Naive thymus-derived CD4-positive, alpha-beta T cell (primary cell): ENCODE measurements at regions of chr15 and their contacts with region 1.

Region 1: DNA sequence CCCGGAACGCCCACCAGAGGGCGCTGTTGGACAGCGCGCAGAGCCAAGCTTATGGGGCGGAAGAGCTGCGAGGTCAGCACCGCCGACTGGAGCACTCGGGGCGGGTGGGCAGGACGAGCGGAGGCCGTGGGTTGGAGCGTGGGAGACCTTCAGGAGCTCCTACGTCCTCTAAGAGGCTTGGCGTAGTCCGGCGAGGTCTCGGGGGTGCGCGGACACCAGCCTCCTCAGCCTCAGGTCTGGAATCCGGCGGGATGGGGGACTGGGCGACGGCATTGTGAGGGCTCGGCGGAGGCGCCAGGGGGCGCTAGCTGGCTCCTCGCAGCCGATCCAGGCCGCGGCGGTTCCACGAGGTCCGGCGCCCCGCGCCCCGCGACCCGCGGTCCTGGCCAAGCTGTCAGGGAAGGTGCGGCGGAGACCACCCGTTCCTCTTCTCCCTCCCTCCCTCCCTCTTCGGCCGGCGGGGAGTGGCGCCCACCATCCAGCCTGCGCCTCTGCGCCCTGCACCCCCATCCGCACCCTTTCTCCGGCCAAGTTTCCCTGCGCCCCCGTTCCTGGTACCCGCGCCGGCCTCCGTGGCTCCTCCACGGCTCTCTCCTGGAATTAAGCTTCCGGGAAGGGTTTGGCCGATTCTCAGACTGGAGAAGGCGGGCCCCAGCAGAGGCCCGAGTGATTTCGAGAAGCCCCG is 24.3 kb upstream of the POLG start:
- DNase-seq: peak; percentile 61 to 89 (median 80)
- ATAC-seq: peak; percentile 96
- H3K4me3 ChIP-seq: peak overlapping the region; percentile 57
- H3K4me3 Mint-ChIP-seq: peak overlapping the region; percentile 70 to 90 (median 80)
- H3K27ac ChIP-seq: no peak overlapping the region
- H3K27ac Mint-ChIP-seq: peak overlapping the region in 1 of 9 donors; percentile 43
- H3K4me1 ChIP-seq: peaks cover 4 to 10% of the 10 kb centered on the region in 2 donors
- H3K4me1 Mint-ChIP-seq: peaks cover 0 to 23% (median 16%) of the 10 kb centered on the region in 7 donors
- H3K27me3 ChIP-seq: peaks cover 8 to 33% of the 10 kb centered on the region in 2 donors
- H3K27me3 Mint-ChIP-seq: peaks cover 61 to 83% (median 72%) of the 10 kb centered on the region in 5 donors

Region 2: GRCh38 chr15:88166082-88166993 is 1192.6 kb before region 1 on chr15:
- CTCF ChIA-PET with region 1: no interaction called
- POLR2A ChIA-PET with region 1: no interaction called
- intact Hi-C with region 1: no loop called
- DNase-seq: no peak
- ATAC-seq: no peak
- H3K4me3 ChIP-seq: no peak overlapping the region
- H3K4me3 Mint-ChIP-seq: no peak overlapping the region
- H3K27ac ChIP-seq: no peak overlapping the region
- H3K27ac Mint-ChIP-seq: no peak overlapping the region
- H3K4me1 ChIP-seq: no peaks in the 10 kb centered on the region
- H3K4me1 Mint-ChIP-seq: no peaks in the 10 kb centered on the region
- H3K27me3 ChIP-seq: no peaks in the 10 kb centered on the region
- H3K27me3 Mint-ChIP-seq: peaks cover 0 to 25% (median 23%) of the 10 kb centered on the region in 5 donors

Region 3: GRCh38 chr15:89206908-89207331 is 152.0 kb before region 1 on chr15:
- CTCF ChIA-PET with region 1: no interaction called
- POLR2A ChIA-PET with region 1: no interaction called
- intact Hi-C with region 1: loop called in 1 of 2 experiments (anchors 2 kb)
- DNase-seq: peak; percentile 38 to 82 (median 61)
- ATAC-seq: peak; percentile 88
- H3K4me3 ChIP-seq: peak overlapping the region; percentile 24
- H3K4me3 Mint-ChIP-seq: peak overlapping the region in 2 of 10 donors; percentile 20 to 59
- H3K27ac ChIP-seq: no peak overlapping the region
- H3K27ac Mint-ChIP-seq: peak overlapping the region in 1 of 9 donors; percentile 28
- H3K4me1 ChIP-seq: peaks cover 0 to 11% of the 10 kb centered on the region in 2 donors
- H3K4me1 Mint-ChIP-seq: peaks cover 7 to 37% (median 27%) of the 10 kb centered on the region in 7 donors
- H3K27me3 ChIP-seq: no peaks in the 10 kb centered on the region
- H3K27me3 Mint-ChIP-seq: peaks cover 0 to 7% (median 0%) of the 10 kb centered on the region in 5 donors

Region 4: DNA sequence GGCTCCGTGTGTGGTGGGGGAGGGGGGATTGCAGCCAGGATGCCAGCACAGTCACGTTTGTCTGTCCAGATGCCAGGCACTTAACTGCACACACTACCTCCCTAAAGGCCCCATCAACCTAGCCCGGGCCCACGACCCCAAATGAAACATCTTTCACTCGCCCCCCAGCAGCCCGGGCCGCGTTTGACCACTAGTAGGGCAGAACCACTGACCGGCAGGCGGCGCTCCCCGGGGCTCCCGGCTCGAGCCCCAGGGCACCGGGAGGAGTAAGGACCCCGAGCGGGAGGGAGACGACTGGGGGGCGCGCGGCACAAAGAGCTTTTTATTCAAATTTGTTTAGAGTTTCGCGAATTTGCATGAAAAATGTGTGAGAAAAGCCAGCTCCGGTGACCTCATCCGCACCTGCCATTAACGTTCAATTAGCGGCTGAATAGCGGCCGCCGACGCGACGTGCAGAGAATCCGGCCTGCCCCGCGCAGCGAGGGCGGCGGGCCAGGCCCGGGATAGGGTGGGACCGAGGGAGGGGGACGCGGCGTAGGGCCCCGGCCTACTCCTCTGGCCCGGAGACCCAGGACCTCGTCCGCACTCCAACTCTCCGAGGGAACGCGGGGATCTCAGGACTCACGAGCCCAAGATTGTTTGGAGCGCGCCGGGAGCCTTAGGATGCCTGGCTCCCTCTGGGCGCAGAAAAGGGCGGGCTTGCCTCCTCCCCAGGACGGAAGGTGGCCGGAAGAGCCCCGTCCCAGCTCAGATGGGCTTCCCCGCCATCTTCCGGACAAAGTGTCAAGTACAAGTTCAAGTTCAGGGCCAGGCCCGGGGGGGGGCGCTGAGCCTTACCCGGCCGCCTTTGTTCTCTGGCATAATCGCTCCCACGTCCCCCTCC is 40.6 kb after region 1 on chr15:
- CTCF ChIA-PET with region 1: interaction called, 6 read pairs
- POLR2A ChIA-PET with region 1: no interaction called
- intact Hi-C with region 1: loop called in 1 of 2 experiments (anchors 2 kb)
- DNase-seq: peak in 1 of 9 donors; percentile 47
- ATAC-seq: peak; percentile 36
- H3K4me3 ChIP-seq: peak overlapping the region; percentile 58
- H3K4me3 Mint-ChIP-seq: peak overlapping the region; percentile 56 to 80 (median 74)
- H3K27ac ChIP-seq: no peak overlapping the region
- H3K27ac Mint-ChIP-seq: no peak overlapping the region
- H3K4me1 ChIP-seq: peaks cover 3 to 6% of the 10 kb centered on the region in 2 donors
- H3K4me1 Mint-ChIP-seq: peaks cover 6 to 22% (median 15%) of the 10 kb centered on the region in 7 donors
- H3K27me3 ChIP-seq: peaks cover 6 to 31% of the 10 kb centered on the region in 2 donors
- H3K27me3 Mint-ChIP-seq: peaks cover 49 to 81% (median 65%) of the 10 kb centered on the region in 5 donors

Region 5: DNA sequence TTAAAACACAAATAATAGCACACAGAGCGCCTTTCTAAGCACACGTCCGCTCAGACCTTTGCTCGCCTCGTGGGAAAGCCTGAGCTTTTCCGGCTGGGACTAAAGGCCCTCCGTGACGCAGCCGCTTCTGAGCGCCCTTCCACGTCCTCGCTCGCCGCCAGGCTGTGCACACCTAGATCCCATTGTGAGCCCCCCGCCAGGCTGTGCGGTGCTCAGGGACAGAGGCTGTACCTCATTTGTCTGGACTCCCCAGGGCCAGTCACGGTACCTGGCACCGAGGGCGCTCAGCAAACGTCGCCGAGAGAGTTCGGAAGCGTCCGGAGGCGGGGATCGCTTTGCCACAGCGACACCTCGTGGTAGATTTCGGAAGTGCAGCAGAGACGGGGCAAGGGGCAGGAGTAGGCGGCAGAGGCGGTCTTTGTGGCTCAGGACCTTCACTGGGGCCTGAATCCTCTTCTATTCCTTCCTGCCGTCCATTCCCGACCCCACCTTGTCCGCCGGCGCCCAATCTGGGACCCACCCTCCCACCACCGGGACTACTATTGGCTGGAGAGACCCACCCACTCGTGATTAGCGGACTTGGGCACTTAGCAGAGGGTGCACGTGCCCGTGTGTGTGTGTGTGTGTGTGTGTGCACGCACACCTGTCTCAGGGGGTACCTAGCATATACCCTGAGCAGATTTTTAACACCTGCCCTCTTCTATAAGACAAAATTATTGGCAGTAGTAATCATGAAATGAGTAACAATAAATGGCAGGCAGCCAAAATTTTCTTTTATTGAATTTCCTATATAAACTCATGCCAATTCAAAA is 71.8 kb after region 1 on chr15:
- CTCF ChIA-PET with region 1: interaction called, 57 read pairs
- POLR2A ChIA-PET with region 1: interaction called, 3 read pairs
- intact Hi-C with region 1: loop called (anchors 1 kb)
- DNase-seq: peak; percentile 54 to 96 (median 79)
- ATAC-seq: peak; percentile 94
- H3K4me3 ChIP-seq: peak overlapping the region; percentile 49
- H3K4me3 Mint-ChIP-seq: peak overlapping the region; percentile 64 to 89 (median 84)
- H3K27ac ChIP-seq: no peak overlapping the region
- H3K27ac Mint-ChIP-seq: peak overlapping the region in 3 of 9 donors; percentile 62 to 78 (median 71)
- H3K4me1 ChIP-seq: no peaks in the 10 kb centered on the region
- H3K4me1 Mint-ChIP-seq: peaks cover 3 to 10% (median 6%) of the 10 kb centered on the region in 7 donors
- H3K27me3 ChIP-seq: no peaks in the 10 kb centered on the region
- H3K27me3 Mint-ChIP-seq: peaks cover 17 to 27% (median 20%) of the 10 kb centered on the region in 5 donors

Region 6: GRCh38 chr15:89556413-89557262 is 197.7 kb after region 1 on chr15:
- CTCF ChIA-PET with region 1: no interaction called
- POLR2A ChIA-PET with region 1: no interaction called
- intact Hi-C with region 1: loop called in 1 of 2 experiments (anchors 1 kb)
- DNase-seq: peak in 7 of 9 donors; percentile 18 to 41 (median 33)
- ATAC-seq: peak; percentile 60
- H3K4me3 ChIP-seq: no peak overlapping the region
- H3K4me3 Mint-ChIP-seq: no peak overlapping the region
- H3K27ac ChIP-seq: no peak overlapping the region
- H3K27ac Mint-ChIP-seq: no peak overlapping the region
- H3K4me1 ChIP-seq: no peaks in the 10 kb centered on the region
- H3K4me1 Mint-ChIP-seq: no peaks in the 10 kb centered on the region
- H3K27me3 ChIP-seq: no peaks in the 10 kb centered on the region
- H3K27me3 Mint-ChIP-seq: peaks cover 0 to 26% (median 14%) of the 10 kb centered on the region in 5 donors